ENCODE measurements at regions of chr1 and their contacts with region 1.

Region 1: DNA sequence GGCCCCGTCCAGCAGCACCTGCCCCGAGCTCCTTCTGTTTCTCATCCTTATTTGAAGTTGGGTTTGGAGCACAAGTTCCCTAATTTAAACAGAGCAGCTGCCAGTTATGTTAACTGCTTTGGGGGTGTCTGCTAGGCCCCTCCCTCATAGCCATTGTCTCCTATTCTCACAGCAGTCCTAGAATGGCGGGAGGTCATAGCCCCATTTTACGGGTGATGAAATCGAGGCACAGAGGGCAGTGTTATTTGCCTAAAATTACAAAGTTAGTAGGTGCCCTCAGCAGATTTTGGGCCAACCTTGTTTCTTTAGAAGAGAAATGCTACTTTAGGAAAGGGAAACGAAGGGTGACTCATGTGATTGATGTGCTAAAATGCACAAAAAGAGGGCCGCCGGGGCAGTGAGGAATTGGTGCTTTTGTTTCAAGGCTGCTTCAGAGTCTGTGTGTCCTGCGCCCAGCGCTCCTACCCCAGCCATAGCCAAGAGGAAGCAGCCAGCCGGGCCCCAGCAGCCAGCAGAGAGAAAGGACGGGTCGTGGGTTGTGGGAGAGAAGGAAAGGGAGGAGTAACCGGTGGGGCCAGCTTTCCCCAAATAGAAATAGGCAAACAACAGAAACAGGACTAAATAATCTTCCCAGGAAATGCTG is 13.0 kb downstream of the VANGL1 start:
- DNase-seq: peak in 2 of 4 experiments; percentile 36 to 40
- ATAC-seq: peak; percentile 36
- H3K4me3 ChIP-seq: no peak overlapping the region
- H3K27ac ChIP-seq: peak overlapping the region; percentile 32
- H3K4me1 ChIP-seq: peaks cover 32 to 42% of the 10 kb centered on the region in 2 experiments
- H3K27me3 ChIP-seq: no peaks in the 10 kb centered on the region
- CTCF ChIP-seq: no peak
- EP300 ChIP-seq: no peak
- POLR2A ChIP-seq: no peak
- RAD21 ChIP-seq: no peak

Region 2: GRCh38 chr1:115669002-115669673 is 14.4 kb after region 1 on chr1:
- CTCF ChIA-PET with region 1: no interaction called
- POLR2A ChIA-PET with region 1: interaction called, 16 read pairs
- in situ Hi-C with region 1: no loop called
- intact Hi-C with region 1: no loop called
- DNase-seq: peak; percentile 59 to 86 (median 65)
- ATAC-seq: peak; percentile 85
- H3K4me3 ChIP-seq: no peak overlapping the region
- H3K27ac ChIP-seq: peak overlapping the region; percentile 69
- H3K4me1 ChIP-seq: peaks cover 11 to 42% of the 10 kb centered on the region in 2 experiments
- H3K27me3 ChIP-seq: no peaks in the 10 kb centered on the region
- CTCF ChIP-seq: no peak; a peak in 1 of 6 replicates
- EP300 ChIP-seq: peak; percentile 69
- POLR2A ChIP-seq: no peak
- RAD21 ChIP-seq: 0 out of 4 replicates have a peak, but pooled peaks of 1 of the 2 experiments have one; percentile 3

Measured in K562 (cell line).